G401 (cell line): ENCODE measurements at regions of chr21 and their contacts with region 1.

Region 1: DNA sequence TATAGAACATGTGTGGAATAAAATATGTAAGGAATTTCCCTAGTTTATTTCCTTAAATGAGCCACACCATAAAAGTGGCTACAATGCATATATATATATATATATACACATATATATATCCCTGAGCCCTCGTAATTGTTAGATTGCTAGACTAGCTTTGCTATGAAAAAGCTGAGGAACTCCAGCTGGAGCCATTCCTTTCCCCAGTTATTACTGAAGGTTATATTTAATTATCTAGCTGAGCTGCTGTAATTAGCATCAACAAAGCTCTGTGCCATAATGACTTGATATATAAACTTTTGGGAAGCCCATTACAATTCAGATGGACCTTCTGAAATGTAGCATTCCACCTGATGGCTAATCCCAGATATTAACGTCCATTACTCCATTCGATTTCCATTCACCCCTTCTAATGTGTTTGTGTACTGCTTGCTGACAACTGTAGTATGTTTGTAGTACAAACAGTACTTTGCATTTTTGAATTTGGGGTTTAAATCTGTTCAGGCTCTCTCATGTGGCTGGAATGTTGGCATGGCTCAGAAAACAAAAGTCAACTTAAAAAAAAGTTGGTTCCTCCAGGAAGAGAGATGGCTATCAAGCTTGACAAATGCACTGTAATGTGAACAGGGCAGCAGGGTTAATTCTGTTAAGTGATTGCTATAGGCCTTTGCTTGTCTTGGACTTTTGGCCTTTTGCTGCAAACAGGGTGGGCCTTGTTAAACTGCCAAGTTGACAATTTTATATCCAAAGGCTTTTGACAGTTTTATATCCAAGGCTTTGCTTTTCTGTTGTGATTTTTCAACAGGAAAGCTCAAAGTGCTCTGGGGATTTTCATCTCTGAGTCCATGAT is 170.0 kb downstream of the LTN1 start:
- DNase-seq: peak; percentile 77

Region 2: DNA sequence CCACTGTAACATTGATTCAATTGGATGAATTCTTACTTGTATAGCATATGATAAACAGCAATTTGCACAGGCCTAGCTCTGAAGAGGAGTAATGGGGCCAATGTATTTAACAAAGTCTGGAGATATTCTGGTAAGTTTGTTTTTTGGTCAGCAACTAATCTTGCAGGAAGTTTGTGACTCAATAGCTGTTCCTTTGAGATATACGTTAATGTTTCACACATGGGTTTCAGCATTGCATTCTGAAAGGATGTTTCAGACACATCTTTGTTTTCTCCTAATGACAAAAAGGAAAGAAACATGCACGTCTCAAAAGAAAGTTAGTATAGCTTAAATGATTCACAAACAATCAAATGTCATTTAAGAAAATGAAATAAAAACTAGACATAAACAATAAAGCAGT is 120.9 kb after region 1 on chr21:
- in situ Hi-C with region 1: loop called (anchors 25 kb)
- DNase-seq: no peak

Region 3: GRCh38 chr21:29052224-29052623 is 229.5 kb after region 1 on chr21:
- in situ Hi-C with region 1: no loop called
- DNase-seq: no peak